ENCODE measurements at regions of chr12 and their contacts with region 1.

Region 1: GRCh38 chr12:52082988-52083637 is 3.6 kb downstream of the SMIM41 start:
- DNase-seq: peak; percentile 80
- ATAC-seq: peak; percentile 53
- H3K4me3 ChIP-seq: no peak overlapping the region
- H3K4me3 Mint-ChIP-seq: peak overlapping the region; percentile 74
- H3K27ac ChIP-seq: no peak overlapping the region
- H3K27ac Mint-ChIP-seq: peak overlapping the region; percentile 75
- H3K4me1 ChIP-seq: peaks cover 35 to 41% of the 10 kb centered on the region in 2 donors
- H3K4me1 Mint-ChIP-seq: peaks cover 37% of the 10 kb centered on the region
- H3K27me3 ChIP-seq: peaks cover 0 to 8% (median 0%) of the 10 kb centered on the region in 4 experiments
- H3K27me3 Mint-ChIP-seq: peaks cover 5% of the 10 kb centered on the region
- CTCF ChIP-seq: peak; percentile 98

Region 2: GRCh38 chr12:51961834-51962233 is 121.3 kb before region 1 on chr12:
- CTCF ChIA-PET with region 1: no interaction called
- POLR2A ChIA-PET with region 1: no interaction called
- intact Hi-C with region 1: no loop called
- DNase-seq: no peak
- ATAC-seq: no peak
- H3K4me3 ChIP-seq: no peak overlapping the region
- H3K4me3 Mint-ChIP-seq: no peak overlapping the region
- H3K27ac ChIP-seq: no peak overlapping the region
- H3K27ac Mint-ChIP-seq: no peak overlapping the region
- H3K4me1 ChIP-seq: no peaks in the 10 kb centered on the region
- H3K4me1 Mint-ChIP-seq: no peaks in the 10 kb centered on the region
- H3K27me3 ChIP-seq: no peaks in the 10 kb centered on the region
- H3K27me3 Mint-ChIP-seq: peaks cover 3% of the 10 kb centered on the region
- CTCF ChIP-seq: no peak

Region 3: GRCh38 chr12:51994959-51995358 is 88.2 kb before region 1 on chr12:
- CTCF ChIA-PET with region 1: interaction called, 9 read pairs
- POLR2A ChIA-PET with region 1: no interaction called
- intact Hi-C with region 1: loop called (anchors 1 kb)
- DNase-seq: no peak
- ATAC-seq: no peak
- H3K4me3 ChIP-seq: no peak overlapping the region
- H3K4me3 Mint-ChIP-seq: no peak overlapping the region
- H3K27ac ChIP-seq: no peak overlapping the region
- H3K27ac Mint-ChIP-seq: no peak overlapping the region
- H3K4me1 ChIP-seq: no peaks in the 10 kb centered on the region
- H3K4me1 Mint-ChIP-seq: peaks cover 2% of the 10 kb centered on the region
- H3K27me3 ChIP-seq: no peaks in the 10 kb centered on the region
- H3K27me3 Mint-ChIP-seq: no peaks in the 10 kb centered on the region
- CTCF ChIP-seq: no peak

Region 4: DNA sequence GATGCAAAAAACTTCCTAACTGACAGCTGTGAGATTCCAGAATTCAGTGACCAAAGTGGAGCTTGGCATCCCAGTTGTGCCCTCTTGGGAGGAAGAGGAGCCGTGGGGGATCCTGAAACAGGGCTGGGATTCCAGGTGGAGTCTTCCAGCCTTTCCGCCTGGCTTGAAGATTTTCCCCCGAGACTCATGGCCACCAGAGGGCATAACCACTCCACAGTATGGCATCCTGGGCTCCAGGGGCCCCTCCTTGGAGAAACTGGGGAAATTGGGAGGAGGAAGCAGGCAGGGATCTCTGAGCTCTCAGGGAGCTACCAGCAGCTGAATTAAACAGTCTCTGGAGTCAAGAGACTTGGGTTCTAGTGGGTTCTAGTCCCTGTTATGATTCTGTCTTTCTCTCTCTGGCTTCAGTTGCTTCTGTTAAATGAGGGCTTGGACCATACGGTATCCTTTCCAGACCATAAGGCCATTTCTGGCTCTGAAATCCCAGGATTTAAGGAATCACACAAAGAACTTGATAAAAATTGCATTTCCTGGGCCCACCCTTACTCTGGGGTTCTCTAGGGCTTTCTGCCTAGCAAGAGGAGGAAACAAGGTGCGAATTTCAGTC is 79.0 kb before region 1 on chr12:
- CTCF ChIA-PET with region 1: interaction called, 36 read pairs
- POLR2A ChIA-PET with region 1: interaction called, 4 read pairs
- intact Hi-C with region 1: loop called (anchors 1 kb)
- DNase-seq: peak; percentile 51
- ATAC-seq: no peak
- H3K4me3 ChIP-seq: no peak overlapping the region
- H3K4me3 Mint-ChIP-seq: no peak overlapping the region
- H3K27ac ChIP-seq: no peak overlapping the region
- H3K27ac Mint-ChIP-seq: no peak overlapping the region
- H3K4me1 ChIP-seq: peaks cover 26 to 32% of the 10 kb centered on the region in 2 donors
- H3K4me1 Mint-ChIP-seq: peaks cover 37% of the 10 kb centered on the region
- H3K27me3 ChIP-seq: no peaks in the 10 kb centered on the region
- H3K27me3 Mint-ChIP-seq: no peaks in the 10 kb centered on the region
- CTCF ChIP-seq: peak; percentile 3

Region 5: GRCh38 chr12:52050761-52051541 is 32.2 kb before region 1 on chr12 and contains the start of gene NR4A1:
- CTCF ChIA-PET with region 1: interaction called, 1,315 read pairs
- POLR2A ChIA-PET with region 1: interaction called, 10 read pairs
- intact Hi-C with region 1: loop called (anchors 1 kb)
- DNase-seq: peak; percentile 99
- ATAC-seq: peak; percentile 80
- H3K4me3 ChIP-seq: peak within 1 kb of the TSS; percentile 73 to 92 (median 86)
- H3K4me3 Mint-ChIP-seq: peak within 1 kb of the TSS; percentile 100
- H3K27ac ChIP-seq: peak within 1 kb of the TSS; percentile 99 to 100
- H3K27ac Mint-ChIP-seq: peak within 1 kb of the TSS; percentile 99
- H3K4me1 ChIP-seq: peaks cover 25 to 38% of the 10 kb centered on the region in 2 donors
- H3K4me1 Mint-ChIP-seq: peaks cover 45% of the 10 kb centered on the region
- H3K27me3 ChIP-seq: no peaks in the 10 kb centered on the region
- H3K27me3 Mint-ChIP-seq: no peaks in the 10 kb centered on the region
- CTCF ChIP-seq: no peak
- total RNA-seq, gene NR4A1: 43.2 and 52.8 TPM in 2 replicates

Region 6: GRCh38 chr12:52069327-52070184 is 13.6 kb before region 1 on chr12 and contains the start of gene ATG101:
- CTCF ChIA-PET with region 1: interaction called, 103 read pairs
- POLR2A ChIA-PET with region 1: interaction called, 5 read pairs
- intact Hi-C with region 1: loop called (anchors 1 kb)
- DNase-seq: peak; percentile 98
- ATAC-seq: peak; percentile 94
- H3K4me3 ChIP-seq: peak within 1 kb of the TSS; percentile 65 to 98 (median 93)
- H3K4me3 Mint-ChIP-seq: peak within 1 kb of the TSS; percentile 90
- H3K27ac ChIP-seq: peak within 1 kb of the TSS; percentile 90 to 93
- H3K27ac Mint-ChIP-seq: peak within 1 kb of the TSS; percentile 96
- H3K4me1 ChIP-seq: peaks cover 29 to 48% of the 10 kb centered on the region in 2 donors
- H3K4me1 Mint-ChIP-seq: peaks cover 46% of the 10 kb centered on the region
- H3K27me3 ChIP-seq: peaks cover 0 to 5% (median 0%) of the 10 kb centered on the region in 4 experiments
- H3K27me3 Mint-ChIP-seq: peaks cover 3% of the 10 kb centered on the region
- CTCF ChIP-seq: peak; percentile 79
- total RNA-seq, gene ATG101: 19.4 and 20.0 TPM in 2 replicates

Region 7: DNA sequence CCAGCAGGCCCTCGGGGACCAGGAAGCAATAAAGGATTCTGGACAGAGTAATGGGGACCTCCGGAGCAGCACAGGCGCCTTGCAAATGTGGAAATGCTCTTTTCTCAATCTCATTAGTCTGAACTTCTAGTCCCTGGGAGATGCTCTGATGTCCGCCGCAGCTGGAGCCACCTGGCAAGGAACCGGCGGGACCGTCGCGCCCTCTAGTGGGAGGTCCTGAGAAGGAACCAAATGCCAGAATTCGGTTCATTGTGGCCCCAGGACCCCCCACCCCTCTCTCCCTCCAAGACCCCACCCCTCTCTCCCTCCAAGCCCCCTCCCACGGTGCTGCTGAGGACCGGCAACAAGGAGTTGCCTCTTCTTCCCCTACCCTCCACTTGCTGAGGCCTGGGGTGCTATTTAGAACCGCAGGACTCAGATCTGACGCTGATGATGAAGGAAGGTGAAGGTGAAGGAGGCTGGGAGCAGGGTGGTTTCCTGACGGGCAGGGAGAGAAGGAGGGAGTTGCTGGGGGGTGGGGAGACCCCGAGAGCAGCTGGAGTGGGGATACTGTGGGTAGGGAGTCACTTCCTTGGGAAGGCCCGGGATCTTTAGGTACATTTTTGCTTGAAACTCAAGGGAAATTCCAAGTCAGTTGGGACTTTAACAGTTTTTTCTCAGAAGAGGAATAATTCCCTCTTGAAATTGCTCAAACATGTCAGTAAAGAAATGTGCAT is 38.9 kb after region 1 on chr12:
- CTCF ChIA-PET with region 1: interaction called, 33 read pairs
- POLR2A ChIA-PET with region 1: no interaction called
- intact Hi-C with region 1: no loop called
- DNase-seq: peak; percentile 73
- ATAC-seq: no peak
- H3K4me3 ChIP-seq: no peak overlapping the region
- H3K4me3 Mint-ChIP-seq: no peak overlapping the region
- H3K27ac ChIP-seq: no peak overlapping the region
- H3K27ac Mint-ChIP-seq: peak overlapping the region; percentile 74
- H3K4me1 ChIP-seq: peaks cover 25 to 36% of the 10 kb centered on the region in 2 donors
- H3K4me1 Mint-ChIP-seq: peaks cover 38% of the 10 kb centered on the region
- H3K27me3 ChIP-seq: peaks cover 0 to 28% (median 8%) of the 10 kb centered on the region in 4 experiments
- H3K27me3 Mint-ChIP-seq: peaks cover 10% of the 10 kb centered on the region
- CTCF ChIP-seq: peak; percentile 87

Measured in B cell (primary cell).